ENCODE measurements at regions of chr11 and their contacts with region 1.

Region 1: GRCh38 chr11:109048098-109048497 is 373.9 kb upstream of the C11orf87 start:
- DNase-seq: no peak
- H3K27ac ChIP-seq: no peak overlapping the region
- CTCF ChIP-seq: no peak

Region 2: DNA sequence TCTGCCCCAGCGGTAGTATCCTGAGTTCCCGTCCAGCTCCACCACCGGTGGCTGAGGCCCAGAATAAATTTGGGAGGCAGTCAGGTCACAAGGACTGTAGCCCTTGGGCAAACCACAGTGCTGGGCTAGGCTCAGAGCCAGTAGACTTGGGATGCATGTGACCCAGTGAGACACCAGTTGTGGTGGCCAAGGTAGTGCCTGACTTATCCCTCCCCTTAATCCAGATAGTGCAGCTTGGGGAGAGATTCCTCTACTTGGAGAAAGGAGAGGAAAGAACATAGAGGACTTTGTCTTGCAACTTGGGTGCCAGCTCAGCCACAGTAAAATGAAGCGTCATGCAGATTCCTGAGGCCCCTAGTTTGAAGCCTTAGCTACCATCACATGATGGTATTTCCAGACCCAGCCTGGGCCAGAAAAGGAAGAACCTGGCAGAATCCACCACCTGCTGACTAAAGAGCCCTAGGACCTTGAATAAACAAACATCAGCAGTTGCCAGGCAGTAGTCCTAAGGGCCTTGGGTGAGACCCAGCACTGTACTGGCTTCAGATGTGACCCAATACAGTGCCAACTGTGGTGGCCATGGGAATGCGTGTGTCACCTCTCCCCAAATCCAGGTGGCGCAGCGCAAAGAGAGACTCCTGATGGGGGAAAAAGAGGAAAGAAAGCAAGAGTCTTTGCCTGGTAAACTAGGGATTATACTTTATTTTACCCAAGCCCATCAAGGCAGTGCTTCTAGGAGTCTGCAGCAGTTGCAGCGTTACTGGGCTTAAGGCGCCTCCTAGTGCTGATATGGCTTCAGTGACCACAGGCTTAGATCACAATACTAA is 400.2 kb before region 1 on chr11:
- CTCF ChIA-PET with region 1: no interaction called
- POLR2A ChIA-PET with region 1: no interaction called
- DNase-seq: peak; percentile 65
- H3K27ac ChIP-seq: no peak overlapping the region
- CTCF ChIP-seq: peak; percentile 74

Region 3: DNA sequence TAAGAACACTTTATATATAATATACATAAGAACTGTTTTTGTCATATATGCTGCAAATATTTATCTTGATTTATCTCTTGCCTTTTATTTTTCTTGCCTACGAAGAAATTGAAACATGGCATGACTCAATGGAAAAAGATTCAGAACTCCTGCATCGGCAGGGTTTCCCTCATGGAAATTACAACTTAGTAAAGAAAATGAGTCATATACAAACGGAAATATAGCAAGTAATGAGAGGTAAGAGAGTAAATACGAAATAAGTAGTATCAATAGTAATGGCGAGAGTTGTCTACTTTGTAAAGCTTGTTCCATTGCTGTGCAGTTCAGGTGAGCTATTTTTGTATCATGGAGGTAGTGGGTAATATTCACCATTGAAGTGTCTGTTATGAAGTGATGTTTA is 32.8 kb before region 1 on chr11:
- CTCF ChIA-PET with region 1: no interaction called
- POLR2A ChIA-PET with region 1: no interaction called
- DNase-seq: peak; percentile 56
- H3K27ac ChIP-seq: no peak overlapping the region
- CTCF ChIP-seq: no peak

Region 4: GRCh38 chr11:109422870-109423465 is 374.9 kb after region 1 on chr11:
- CTCF ChIA-PET with region 1: interaction called, 12 read pairs
- POLR2A ChIA-PET with region 1: no interaction called
- DNase-seq: no peak
- H3K27ac ChIP-seq: no peak overlapping the region
- CTCF ChIP-seq: no peak

Measured in RWPE1 (cell line).